ENCODE measurements at regions of chr1 and their contacts with region 1.

Region 1: GRCh38 chr1:176559878-176560277 is 96.9 kb downstream of the PAPPA2 start:
- DNase-seq: peak; percentile 58
- ATAC-seq: peak; percentile 99
- H3K4me3 ChIP-seq: no peak overlapping the region
- H3K27ac ChIP-seq: no peak overlapping the region
- H3K4me1 ChIP-seq: no peaks in the 10 kb centered on the region
- H3K27me3 ChIP-seq: no peaks in the 10 kb centered on the region; a peak in 2 of 5 replicates
- CTCF ChIP-seq: peak; percentile 84
- EP300 ChIP-seq: no peak
- POLR2A ChIP-seq: no peak
- RAD21 ChIP-seq: peak; percentile 68

Region 2: DNA sequence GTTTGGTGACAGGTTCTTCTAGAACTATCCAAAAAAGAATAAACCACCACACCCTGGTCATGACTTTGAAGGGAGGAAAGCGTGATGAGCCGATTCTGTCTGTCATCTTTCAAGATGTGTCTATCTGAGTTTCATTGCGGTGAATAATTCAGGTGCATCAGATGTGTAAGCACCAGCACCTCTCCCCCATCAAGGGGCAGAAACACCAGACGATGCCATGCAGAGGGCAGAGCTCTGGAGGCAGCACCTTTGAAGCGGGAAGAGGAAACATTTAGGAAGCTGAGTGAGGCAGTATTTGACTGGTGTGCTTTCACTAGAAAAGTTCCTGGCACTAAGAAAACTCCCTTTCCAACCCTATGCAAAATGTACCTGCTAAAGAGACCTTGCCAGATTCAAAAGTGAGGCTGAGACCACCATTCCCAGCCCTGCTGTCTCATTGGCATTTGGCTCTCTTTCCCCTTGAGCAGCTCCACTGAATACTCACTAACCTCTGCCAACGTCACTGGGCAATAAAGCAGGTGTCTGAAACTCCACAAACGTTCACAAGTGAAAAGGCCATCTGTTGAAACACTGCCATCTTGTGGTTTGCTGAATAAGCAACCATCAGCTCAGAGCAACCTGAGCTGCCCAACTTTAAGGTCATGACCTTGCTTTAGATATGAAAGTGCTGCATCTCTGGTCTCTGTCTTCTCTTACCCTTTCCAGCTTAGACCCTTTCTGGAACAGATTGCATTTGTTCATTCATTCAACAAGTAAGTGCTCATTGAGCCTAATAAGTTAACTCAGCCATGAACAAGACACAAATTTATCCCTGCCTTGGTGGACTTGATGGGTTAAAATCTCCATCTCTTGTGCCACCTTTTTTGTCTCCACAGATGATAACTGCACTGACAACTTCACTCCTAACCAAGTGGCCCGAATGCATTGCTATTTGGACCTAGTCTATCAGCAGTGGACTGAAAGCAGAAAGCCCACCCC is 131.7 kb after region 1 on chr1:
- CTCF ChIA-PET with region 1: interaction called, 18 read pairs
- POLR2A ChIA-PET with region 1: no interaction called
- in situ Hi-C with region 1: loop called (anchors 5 kb)
- intact Hi-C with region 1: no loop called
- DNase-seq: peak; percentile 52
- ATAC-seq: peak; percentile 88
- H3K4me3 ChIP-seq: no peak overlapping the region
- H3K27ac ChIP-seq: no peak overlapping the region
- H3K4me1 ChIP-seq: no peaks in the 10 kb centered on the region
- H3K27me3 ChIP-seq: no peaks in the 10 kb centered on the region
- CTCF ChIP-seq: peak; percentile 84
- EP300 ChIP-seq: no peak
- POLR2A ChIP-seq: no peak
- RAD21 ChIP-seq: no peak

Region 3: GRCh38 chr1:176843352-176844297 is 283.7 kb after region 1 on chr1:
- CTCF ChIA-PET with region 1: interaction called, 5 read pairs
- POLR2A ChIA-PET with region 1: no interaction called
- in situ Hi-C with region 1: loop called (anchors 10 kb)
- intact Hi-C with region 1: no loop called
- DNase-seq: peak; percentile 7
- ATAC-seq: no peak; the same call in 2 of the 3 replicates
- H3K4me3 ChIP-seq: no peak overlapping the region
- H3K27ac ChIP-seq: no peak overlapping the region
- H3K4me1 ChIP-seq: no peaks in the 10 kb centered on the region
- H3K27me3 ChIP-seq: no peaks in the 10 kb centered on the region
- CTCF ChIP-seq: peak; percentile 50
- EP300 ChIP-seq: no peak
- POLR2A ChIP-seq: no peak
- RAD21 ChIP-seq: no peak

Region 4: DNA sequence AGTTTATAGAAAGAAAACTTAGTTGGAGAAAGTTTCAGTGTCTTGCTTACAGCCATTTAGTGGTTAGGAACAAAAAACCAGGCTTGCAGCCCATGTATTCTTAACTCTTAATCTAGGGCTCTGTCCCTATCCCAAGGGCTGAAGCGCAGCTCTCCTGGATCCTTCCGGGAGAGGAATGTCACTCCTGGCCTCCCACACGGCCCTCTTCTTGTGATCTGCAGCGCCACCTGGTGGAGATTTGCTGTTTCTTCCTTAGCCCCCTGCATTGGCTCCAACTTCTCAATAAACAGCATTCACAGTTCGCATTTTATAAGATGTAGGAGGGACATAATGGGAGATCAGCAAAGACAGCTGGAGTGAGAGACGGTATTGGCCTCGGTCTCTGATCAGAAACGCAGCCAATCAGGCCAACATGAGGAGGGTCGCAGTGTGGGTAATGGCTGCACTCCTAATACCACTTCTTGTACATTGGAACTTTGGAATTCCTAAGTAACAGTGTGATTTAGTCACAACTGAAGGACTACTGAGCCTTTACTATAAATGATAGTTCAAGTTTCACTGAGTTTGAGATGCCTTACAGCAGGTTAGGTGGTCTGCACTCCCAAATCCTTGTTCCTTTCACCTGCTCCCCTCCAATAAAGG is 321.2 kb after region 1 on chr1:
- CTCF ChIA-PET with region 1: interaction called, 31 read pairs
- POLR2A ChIA-PET with region 1: no interaction called
- in situ Hi-C with region 1: loop called (anchors 5 kb)
- intact Hi-C with region 1: no loop called
- DNase-seq: peak; percentile 52
- ATAC-seq: peak; percentile 95
- H3K4me3 ChIP-seq: no peak overlapping the region
- H3K27ac ChIP-seq: no peak overlapping the region
- H3K4me1 ChIP-seq: no peaks in the 10 kb centered on the region
- H3K27me3 ChIP-seq: 0 out of 5 replicates have a peak, but pooled peaks cover 0 to 3% of the 10 kb centered on the region in 2 experiments
- CTCF ChIP-seq: peak; percentile 84
- EP300 ChIP-seq: no peak
- POLR2A ChIP-seq: no peak
- RAD21 ChIP-seq: peak; percentile 53